Activated naive CD4-positive, alpha-beta T cell treated with anti-CD3 and anti-CD28 coated beads for 36 hours (primary cell): ENCODE measurements at regions of chr2 and their contacts with region 1.

Region 1: GRCh38 chr2:61694312-61695274 is 156.4 kb upstream of the XPO1 start:
- DNase-seq: peak; percentile 88
- H3K4me3 Mint-ChIP-seq: peak overlapping the region; percentile 86
- H3K27ac Mint-ChIP-seq: peak overlapping the region; percentile 59
- H3K4me1 Mint-ChIP-seq: peaks cover 11% of the 10 kb centered on the region
- H3K27me3 Mint-ChIP-seq: no peaks in the 10 kb centered on the region

Region 2: GRCh38 chr2:60756191-60757041 is 938.2 kb before region 1 on chr2 and contains the start of gene PAPOLG:
- CTCF ChIA-PET with region 1: no interaction called
- intact Hi-C with region 1: loop called (anchors 1 kb)
- DNase-seq: peak; percentile 99
- H3K4me3 Mint-ChIP-seq: peak within 1 kb of the TSS; percentile 99
- H3K27ac Mint-ChIP-seq: peak within 1 kb of the TSS; percentile 97
- H3K4me1 Mint-ChIP-seq: peaks cover 40% of the 10 kb centered on the region
- H3K27me3 Mint-ChIP-seq: no peaks in the 10 kb centered on the region
- total RNA-seq, gene PAPOLG: 14.1 to 16.1 TPM

Region 3: DNA sequence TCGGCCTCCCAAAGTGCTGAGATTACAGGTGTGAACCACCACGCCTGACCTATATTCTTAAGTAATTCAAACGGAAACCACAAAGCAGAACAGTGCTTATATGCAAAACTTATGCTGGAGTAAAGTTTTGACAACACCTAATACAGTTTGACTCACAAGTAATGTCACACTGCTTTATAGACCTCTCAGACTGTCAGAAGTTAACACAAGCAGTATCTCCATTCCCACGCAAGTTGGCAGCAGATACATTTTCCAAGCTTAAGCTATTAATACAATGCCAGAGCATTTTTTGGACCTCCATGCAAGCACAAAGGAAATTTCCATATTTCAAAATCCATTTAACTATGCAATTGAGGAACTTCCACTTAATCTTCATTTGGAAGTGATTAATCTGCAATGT is 650.0 kb before region 1 on chr2:
- CTCF ChIA-PET with region 1: no interaction called
- intact Hi-C with region 1: no loop called
- DNase-seq: no peak
- H3K4me3 Mint-ChIP-seq: no peak overlapping the region
- H3K27ac Mint-ChIP-seq: no peak overlapping the region
- H3K4me1 Mint-ChIP-seq: peaks cover 16% of the 10 kb centered on the region
- H3K27me3 Mint-ChIP-seq: no peaks in the 10 kb centered on the region

Region 4: GRCh38 chr2:61604433-61604832 is 90.2 kb before region 1 on chr2:
- CTCF ChIA-PET with region 1: no interaction called
- intact Hi-C with region 1: no loop called
- DNase-seq: no peak
- H3K4me3 Mint-ChIP-seq: no peak overlapping the region
- H3K27ac Mint-ChIP-seq: no peak overlapping the region
- H3K4me1 Mint-ChIP-seq: no peaks in the 10 kb centered on the region
- H3K27me3 Mint-ChIP-seq: no peaks in the 10 kb centered on the region

Region 5: GRCh38 chr2:61670591-61671501 is 23.7 kb before region 1 on chr2:
- CTCF ChIA-PET with region 1: no interaction called
- intact Hi-C with region 1: loop called (anchors 1 kb)
- DNase-seq: peak; percentile 51
- H3K4me3 Mint-ChIP-seq: peak overlapping the region; percentile 10
- H3K27ac Mint-ChIP-seq: peak overlapping the region; percentile 57
- H3K4me1 Mint-ChIP-seq: peaks cover 17% of the 10 kb centered on the region
- H3K27me3 Mint-ChIP-seq: no peaks in the 10 kb centered on the region

Region 6: GRCh38 chr2:62195421-62196277 is 501.1 kb after region 1 on chr2 and contains the start of gene B3GNT2:
- CTCF ChIA-PET with region 1: no interaction called
- intact Hi-C with region 1: loop called (anchors 10 kb)
- DNase-seq: peak; percentile 85
- H3K4me3 Mint-ChIP-seq: peak within 1 kb of the TSS; percentile 88
- H3K27ac Mint-ChIP-seq: peak within 1 kb of the TSS; percentile 91
- H3K4me1 Mint-ChIP-seq: peaks cover 22% of the 10 kb centered on the region
- H3K27me3 Mint-ChIP-seq: peaks cover 2% of the 10 kb centered on the region
- total RNA-seq, gene B3GNT2: 31.2 to 33.0 TPM